ENCODE measurements at regions of chr12 and their contacts with region 1.

Region 1: GRCh38 chr12:62205346-62205745 is 54.9 kb upstream of the USP15 start:
- DNase-seq: no peak
- H3K4me3 ChIP-seq: no peak overlapping the region
- H3K27ac ChIP-seq: no peak overlapping the region
- H3K27me3 ChIP-seq: no peaks in the 10 kb centered on the region
- CTCF ChIP-seq: no peak

Region 2: DNA sequence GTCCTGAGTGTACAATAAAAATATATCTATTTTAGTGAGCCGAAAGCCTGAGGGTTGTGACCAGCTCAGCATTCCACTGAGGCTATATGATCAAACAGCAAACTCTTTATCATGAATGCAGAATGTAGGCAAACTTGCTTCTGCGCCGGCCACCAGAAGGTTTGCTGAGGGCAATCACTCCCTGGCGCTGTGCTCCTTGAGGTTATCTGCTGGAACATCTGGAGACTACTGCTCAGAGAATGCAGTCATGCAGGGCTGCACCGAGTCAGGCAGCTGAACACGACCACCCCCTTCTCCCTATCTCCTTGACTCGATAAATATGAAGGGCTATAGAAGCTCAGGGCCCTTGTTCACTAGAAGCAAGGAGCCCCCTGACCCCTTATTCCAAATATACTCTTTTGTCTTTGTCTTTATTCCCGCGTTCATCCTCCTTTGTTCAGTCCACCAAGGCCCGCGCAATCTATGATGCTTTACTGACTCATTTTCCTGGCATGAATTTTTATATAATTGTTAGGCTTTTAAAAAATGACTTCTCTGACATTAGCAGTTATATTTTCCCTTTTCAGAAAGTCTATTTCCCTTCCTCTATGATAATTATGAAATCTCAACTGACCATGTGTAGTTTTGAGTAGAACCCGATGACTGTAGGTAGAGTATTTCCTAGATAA is 1520.2 kb before region 1 on chr12:
- intact Hi-C with region 1: loop called in 1 of 2 experiments (anchors 10 kb)
- DNase-seq: no peak
- H3K4me3 ChIP-seq: no peak overlapping the region
- H3K27ac ChIP-seq: no peak overlapping the region
- H3K27me3 ChIP-seq: peaks cover 0 to 2% (median 0%) of the 10 kb centered on the region in 45 donors
- CTCF ChIP-seq: peak in 5 of 56 donors; percentile 15 to 30 (median 26)

Region 3: GRCh38 chr12:61213631-61214030 is 991.7 kb before region 1 on chr12:
- intact Hi-C with region 1: no loop called
- DNase-seq: no peak
- H3K4me3 ChIP-seq: no peak overlapping the region
- H3K27ac ChIP-seq: no peak overlapping the region
- H3K27me3 ChIP-seq: no peaks in the 10 kb centered on the region
- CTCF ChIP-seq: no peak

Region 4: GRCh38 chr12:61879229-61879628 is 326.1 kb before region 1 on chr12:
- intact Hi-C with region 1: no loop called
- DNase-seq: no peak
- H3K4me3 ChIP-seq: no peak overlapping the region
- H3K27ac ChIP-seq: no peak overlapping the region
- H3K27me3 ChIP-seq: no peaks in the 10 kb centered on the region
- CTCF ChIP-seq: no peak

Region 5: GRCh38 chr12:62268956-62269355 is 63.6 kb after region 1 on chr12:
- intact Hi-C with region 1: no loop called
- DNase-seq: no peak
- H3K4me3 ChIP-seq: no peak overlapping the region
- H3K27ac ChIP-seq: no peak overlapping the region
- H3K27me3 ChIP-seq: no peaks in the 10 kb centered on the region
- CTCF ChIP-seq: no peak

Region 6: DNA sequence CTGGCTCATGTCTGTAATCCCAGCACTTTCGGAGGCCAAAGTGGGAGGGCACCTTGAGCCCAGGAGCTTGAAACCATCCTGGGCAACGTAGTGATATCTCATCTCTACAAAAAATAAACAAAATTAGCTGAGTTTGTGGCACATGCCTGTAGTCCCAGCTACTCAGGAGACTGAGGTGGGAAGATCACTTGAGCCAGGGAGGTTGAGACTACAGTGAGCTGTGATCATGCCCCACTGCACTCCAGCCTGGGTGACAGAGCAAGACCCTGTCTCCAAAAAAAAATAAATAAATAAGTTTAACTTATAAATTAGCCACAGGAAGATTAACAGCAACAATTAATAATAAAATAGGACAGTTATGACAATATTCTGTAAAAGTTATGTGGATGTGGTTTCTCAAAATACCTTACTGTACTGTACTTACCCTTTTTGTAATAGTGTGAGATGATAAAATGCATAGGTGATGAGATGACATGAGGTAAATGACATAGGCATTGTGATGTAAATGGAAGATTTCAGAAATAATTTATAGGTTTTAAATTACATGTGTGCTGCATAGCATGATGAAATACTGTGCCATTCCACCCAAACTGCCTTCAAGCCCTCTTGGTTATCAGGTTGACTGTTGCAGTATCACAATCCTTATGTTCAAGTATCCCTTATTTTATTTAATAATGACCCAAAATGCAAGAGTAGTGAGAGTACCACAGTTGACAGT is 76.9 kb after region 1 on chr12:
- intact Hi-C with region 1: no loop called
- DNase-seq: no peak
- H3K4me3 ChIP-seq: no peak overlapping the region
- H3K27ac ChIP-seq: no peak overlapping the region
- H3K27me3 ChIP-seq: no peaks in the 10 kb centered on the region
- CTCF ChIP-seq: no peak